ENCODE measurements at regions of chr9 and their contacts with region 1.

Region 1: DNA sequence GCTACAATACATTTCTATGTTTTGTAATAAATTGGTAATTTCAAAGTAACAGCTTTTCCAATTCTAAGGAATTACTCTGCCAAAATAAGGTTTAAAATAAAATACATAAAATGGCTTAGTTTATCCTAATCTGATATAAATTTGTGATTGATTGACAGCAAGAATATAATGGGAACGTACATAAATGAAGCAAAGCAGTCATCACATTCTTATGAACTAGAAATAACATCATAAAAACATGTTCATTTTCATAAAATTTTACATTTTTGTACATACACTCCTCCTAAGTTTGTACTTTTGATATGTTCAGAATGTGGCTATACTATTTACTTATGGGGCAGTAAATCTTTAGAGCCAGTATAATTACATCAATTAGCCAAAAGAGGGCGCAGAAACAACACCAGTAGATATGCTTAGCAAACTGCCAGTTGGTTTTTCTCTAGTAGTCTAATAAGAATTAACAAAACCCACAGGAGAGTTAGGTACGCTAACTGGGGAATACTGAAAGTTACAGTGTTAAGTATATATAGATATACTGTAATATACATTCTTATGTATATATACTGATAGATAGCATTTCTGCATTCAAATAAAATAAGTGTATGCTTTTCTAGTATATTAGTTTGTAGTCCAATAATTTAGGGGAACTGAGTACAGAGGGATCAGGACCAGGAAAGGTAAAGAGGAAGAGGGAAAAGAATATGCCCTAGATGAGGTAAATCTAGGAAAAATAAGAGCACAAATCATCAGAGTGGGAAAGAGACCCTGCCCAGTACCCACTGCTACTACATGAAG is 76.8 kb downstream of the ZDHHC21 start:
- DNase-seq: peak; percentile 75
- H3K4me3 ChIP-seq: no peak overlapping the region
- H3K27ac ChIP-seq: no peak overlapping the region
- H3K4me1 ChIP-seq: no peaks in the 10 kb centered on the region
- CTCF ChIP-seq: peak; percentile 96

Region 2: DNA sequence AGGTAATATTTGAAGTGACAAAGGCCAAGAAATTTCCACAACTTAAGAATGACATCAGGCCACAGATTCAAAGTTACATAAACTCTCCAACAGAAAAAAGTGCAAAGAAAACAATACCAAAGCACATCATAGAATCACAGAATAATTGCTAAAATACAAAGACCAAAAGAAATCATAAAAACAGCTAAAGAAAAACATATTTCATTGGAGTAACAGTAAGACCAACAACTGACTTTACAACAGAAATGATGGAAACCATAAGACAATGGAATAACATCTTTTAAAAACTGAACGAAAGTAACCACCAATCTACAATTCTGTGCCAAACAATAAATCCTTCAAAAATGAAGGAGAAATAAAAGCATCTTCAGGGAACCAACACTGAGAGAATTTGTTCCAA is 38.5 kb after region 1 on chr9:
- CTCF ChIA-PET with region 1: interaction called, 3 read pairs
- POLR2A ChIA-PET with region 1: interaction called, 3 read pairs
- intact Hi-C with region 1: loop called (anchors 5 kb)
- DNase-seq: peak; percentile 12
- H3K4me3 ChIP-seq: no peak overlapping the region
- H3K27ac ChIP-seq: no peak overlapping the region
- H3K4me1 ChIP-seq: no peaks in the 10 kb centered on the region
- CTCF ChIP-seq: no peak

Region 3: DNA sequence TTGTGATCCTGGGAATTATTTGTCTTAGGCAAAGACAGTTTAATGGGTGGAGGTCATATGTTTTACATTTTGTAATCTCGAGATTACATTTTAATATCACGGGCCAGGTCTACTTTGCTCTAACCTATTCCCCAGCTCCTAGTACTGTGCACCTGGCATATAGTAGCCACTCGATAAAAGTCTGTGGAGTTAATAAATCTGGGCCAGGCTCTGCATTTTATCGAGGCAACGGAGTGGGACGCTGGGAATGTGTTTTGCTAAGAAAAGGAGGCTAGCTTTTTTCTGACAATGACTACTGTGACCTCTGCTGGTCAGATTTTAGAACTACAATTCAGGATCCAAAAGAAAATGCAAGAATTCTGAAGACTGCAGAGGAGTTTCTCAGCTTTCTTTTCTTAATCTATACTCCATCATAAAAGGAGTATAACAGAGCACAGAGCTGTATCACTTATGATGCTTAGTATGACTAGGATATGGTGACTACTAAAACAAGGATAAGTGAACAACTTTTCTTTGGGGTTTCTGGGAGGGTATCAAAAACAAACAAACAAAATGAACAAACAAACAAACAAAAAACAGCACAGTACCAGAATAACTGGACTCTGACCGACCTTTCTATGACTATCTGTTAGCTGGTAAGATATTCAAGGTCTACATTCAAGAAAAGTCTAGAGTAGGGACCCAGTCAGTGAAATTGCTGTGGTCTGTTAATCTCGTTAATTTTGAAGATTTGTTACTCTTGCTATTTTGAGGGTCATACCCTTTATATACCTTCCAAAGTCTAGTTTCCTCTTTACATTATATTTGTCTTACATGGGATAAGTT is 152.2 kb after region 1 on chr9:
- CTCF ChIA-PET with region 1: no interaction called
- POLR2A ChIA-PET with region 1: interaction called, 4 read pairs
- intact Hi-C with region 1: loop called (anchors 1 kb)
- DNase-seq: peak; percentile 52
- H3K4me3 ChIP-seq: no peak overlapping the region
- H3K27ac ChIP-seq: no peak overlapping the region
- H3K4me1 ChIP-seq: no peaks in the 10 kb centered on the region
- CTCF ChIP-seq: peak; percentile 87

Region 4: DNA sequence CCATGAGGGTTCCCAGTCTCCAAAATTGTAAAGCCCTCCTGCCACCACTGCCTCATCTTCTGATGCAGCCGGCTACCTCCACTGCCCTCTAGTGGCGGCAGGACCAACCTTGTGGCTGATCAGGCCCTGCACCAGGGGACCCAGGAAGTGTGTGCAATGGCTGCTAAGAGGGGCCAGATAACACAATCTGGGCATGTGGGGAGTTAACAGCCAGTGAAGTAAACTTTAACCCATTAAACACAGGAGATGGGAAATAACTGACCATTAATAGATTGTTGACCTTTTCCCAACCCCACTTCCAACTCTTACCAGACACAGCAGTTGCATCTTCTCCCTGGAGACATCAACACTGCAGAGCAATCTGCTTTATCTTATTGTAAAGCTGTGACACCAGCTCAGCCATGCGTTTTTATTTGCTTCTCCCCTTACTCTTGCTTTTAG is 230.5 kb after region 1 on chr9:
- CTCF ChIA-PET with region 1: no interaction called
- POLR2A ChIA-PET with region 1: no interaction called
- intact Hi-C with region 1: loop called (anchors 10 kb)
- DNase-seq: peak; percentile 73
- H3K4me3 ChIP-seq: no peak overlapping the region
- H3K27ac ChIP-seq: no peak overlapping the region
- H3K4me1 ChIP-seq: no peaks in the 10 kb centered on the region
- CTCF ChIP-seq: peak; percentile 91